Mammary epithelial cell (primary cell): ENCODE measurements at regions of chr6 and their contacts with region 1.

Region 1: GRCh38 chr6:138287144-138287955 is 69.1 kb upstream of the PBOV1 start:
- DNase-seq: peak; percentile 33
- H3K4me3 ChIP-seq: no peak overlapping the region
- H3K27ac ChIP-seq: peak overlapping the region; percentile 88
- H3K4me1 ChIP-seq: peaks cover 30% of the 10 kb centered on the region
- H3K27me3 ChIP-seq: no peaks in the 10 kb centered on the region
- CTCF ChIP-seq: peak; percentile 64 to 79

Region 2: DNA sequence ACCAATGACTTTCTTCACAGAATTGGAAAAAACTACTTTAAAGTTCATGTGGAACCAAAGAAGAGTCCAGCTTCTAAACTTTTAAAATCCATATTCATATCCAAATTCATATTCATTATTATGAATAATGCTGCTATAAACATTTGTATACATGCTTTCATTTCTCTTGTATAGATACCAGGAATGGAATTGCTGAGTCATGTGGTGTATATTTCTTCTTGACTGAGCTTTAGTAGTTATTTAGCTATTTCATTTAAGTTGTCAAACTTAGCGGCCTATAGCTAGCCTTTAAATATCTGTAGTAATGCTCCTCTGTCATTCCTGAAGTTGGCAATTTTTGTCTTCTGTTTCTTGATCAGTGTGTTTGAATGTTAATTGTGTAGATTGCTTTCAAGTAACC is 70.6 kb after region 1 on chr6:
- CTCF ChIA-PET with region 1: no interaction called
- dilution Hi-C with region 1: loop called (anchors 5 kb)
- in situ Hi-C with region 1: no loop called
- intact Hi-C with region 1: no loop called
- DNase-seq: no peak
- H3K4me3 ChIP-seq: no peak overlapping the region
- H3K27ac ChIP-seq: no peak overlapping the region
- H3K4me1 ChIP-seq: no peaks in the 10 kb centered on the region
- H3K27me3 ChIP-seq: no peaks in the 10 kb centered on the region
- CTCF ChIP-seq: no peak

Region 3: DNA sequence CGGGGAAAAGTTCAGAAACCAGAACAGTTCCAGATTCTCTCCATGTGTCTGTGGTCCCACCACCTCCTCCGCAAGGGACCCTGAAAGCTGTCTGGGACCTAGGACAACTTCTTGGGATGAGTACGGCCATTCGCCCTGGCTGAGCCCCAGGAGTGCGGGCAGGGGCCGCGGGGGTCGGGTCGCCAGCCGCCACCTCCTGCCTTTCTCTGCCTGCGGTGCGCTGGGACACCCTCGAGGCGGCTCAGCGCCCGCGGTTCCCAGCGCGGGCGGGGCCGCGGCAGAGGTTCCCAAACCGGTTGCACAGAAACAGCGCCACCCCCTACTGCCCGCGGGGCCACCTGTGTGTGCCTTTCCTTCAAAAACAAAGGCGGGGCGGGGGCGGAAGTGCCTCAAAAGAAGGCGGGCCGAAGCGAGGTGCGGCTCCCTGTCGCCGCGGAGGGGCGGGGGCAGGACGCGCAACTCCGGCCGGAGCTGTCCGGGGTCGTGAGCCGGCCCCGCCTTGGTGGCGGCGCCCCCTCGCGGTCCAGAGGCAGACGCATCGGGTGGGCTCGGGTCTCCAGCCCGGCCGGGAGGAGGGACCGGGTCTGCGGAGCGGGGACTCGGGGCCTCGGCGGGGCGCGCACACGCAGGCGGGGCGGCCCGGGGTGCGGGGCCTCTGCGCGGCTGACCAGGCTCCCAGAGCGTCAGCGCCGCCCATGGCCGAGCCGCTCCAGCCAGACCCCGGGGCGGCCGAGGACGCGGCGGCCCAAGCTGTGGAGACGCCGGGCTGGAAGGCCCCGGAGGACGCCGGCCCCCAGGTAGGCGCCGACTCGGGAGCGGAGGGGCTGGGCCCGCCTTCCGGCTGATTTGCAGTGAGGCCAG is 116.7 kb after region 1 on chr6 and contains the start of gene HEBP2:
- CTCF ChIA-PET with region 1: no interaction called
- dilution Hi-C with region 1: no loop called
- in situ Hi-C with region 1: loop called in 1 of 2 experiments (anchors 10 kb)
- intact Hi-C with region 1: loop called (anchors 1 kb)
- DNase-seq: peak; percentile 95
- H3K4me3 ChIP-seq: peak within 1 kb of the TSS; percentile 84 to 98 (median 88)
- H3K27ac ChIP-seq: peak within 1 kb of the TSS; percentile 98
- H3K4me1 ChIP-seq: peaks cover 21% of the 10 kb centered on the region
- H3K27me3 ChIP-seq: no peaks in the 10 kb centered on the region
- CTCF ChIP-seq: peak in 1 of 2 donors; percentile 40
- total RNA-seq, gene HEBP2: 63.8 to 99.1 TPM

Region 4: GRCh38 chr6:138509371-138509770 is 222.0 kb after region 1 on chr6:
- CTCF ChIA-PET with region 1: no interaction called
- dilution Hi-C with region 1: no loop called
- in situ Hi-C with region 1: loop called in 1 of 2 experiments (anchors 25 kb)
- intact Hi-C with region 1: loop called (anchors 2 kb)
- DNase-seq: peak; percentile 47
- H3K4me3 ChIP-seq: no peak overlapping the region
- H3K27ac ChIP-seq: no peak overlapping the region
- H3K4me1 ChIP-seq: no peaks in the 10 kb centered on the region
- H3K27me3 ChIP-seq: no peaks in the 10 kb centered on the region
- CTCF ChIP-seq: peak; percentile 64 to 68

Region 5: DNA sequence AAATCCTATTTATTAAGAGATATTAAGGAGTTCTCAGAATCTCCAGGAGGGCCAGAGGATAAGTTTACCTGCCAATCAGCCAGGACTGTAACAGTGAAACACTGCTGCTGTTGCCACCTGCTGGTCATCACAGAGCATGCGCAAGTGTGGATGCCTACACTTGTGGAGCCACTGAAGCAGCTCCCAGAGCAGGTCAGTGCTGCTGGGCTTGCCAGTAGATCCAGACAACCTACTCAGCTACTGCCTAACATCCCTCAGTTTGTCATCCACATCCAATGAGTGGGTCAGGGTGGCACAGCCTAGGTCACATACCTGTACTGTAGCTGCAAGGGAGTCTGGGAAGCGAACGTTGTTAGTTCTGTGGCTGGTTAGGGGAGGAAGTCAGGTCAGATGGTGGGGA is 230.3 kb after region 1 on chr6:
- CTCF ChIA-PET with region 1: no interaction called
- dilution Hi-C with region 1: no loop called
- in situ Hi-C with region 1: loop called in 1 of 2 experiments (anchors 25 kb)
- intact Hi-C with region 1: no loop called
- DNase-seq: peak; percentile 48
- H3K4me3 ChIP-seq: no peak overlapping the region
- H3K27ac ChIP-seq: no peak overlapping the region
- H3K4me1 ChIP-seq: peaks cover 8% of the 10 kb centered on the region
- H3K27me3 ChIP-seq: no peaks in the 10 kb centered on the region
- CTCF ChIP-seq: peak; percentile 87 to 95